ENCODE measurements at regions of chr6 and their contacts with region 1.

Region 1: GRCh38 chr6:105066233-105066632 is 109.3 kb downstream of the LIN28B start:
- DNase-seq: peak; percentile 41 to 54
- H3K4me3 ChIP-seq: no peak overlapping the region
- H3K4me3 Mint-ChIP-seq: peak overlapping the region; percentile 14
- H3K27ac Mint-ChIP-seq: peak overlapping the region; percentile 44
- H3K4me1 ChIP-seq: peaks cover 37% of the 10 kb centered on the region
- H3K4me1 Mint-ChIP-seq: peaks cover 41% of the 10 kb centered on the region
- H3K27me3 ChIP-seq: no peaks in the 10 kb centered on the region
- H3K27me3 Mint-ChIP-seq: no peaks in the 10 kb centered on the region
- CTCF ChIP-seq: no peak

Region 2: GRCh38 chr6:104783361-104783760 is 282.9 kb before region 1 on chr6:
- CTCF ChIA-PET with region 1: no interaction called
- POLR2A ChIA-PET with region 1: no interaction called
- intact Hi-C with region 1: loop called (anchors 1 kb)
- DNase-seq: no peak
- H3K4me3 ChIP-seq: no peak overlapping the region
- H3K4me3 Mint-ChIP-seq: no peak overlapping the region
- H3K27ac Mint-ChIP-seq: peak overlapping the region; percentile 16
- H3K4me1 ChIP-seq: peaks cover 19% of the 10 kb centered on the region
- H3K4me1 Mint-ChIP-seq: peaks cover 32% of the 10 kb centered on the region
- H3K27me3 ChIP-seq: no peaks in the 10 kb centered on the region
- H3K27me3 Mint-ChIP-seq: no peaks in the 10 kb centered on the region
- CTCF ChIP-seq: no peak